K562 (cell line): ENCODE measurements at regions of chr3 and their contacts with region 1.

Region 1: GRCh38 chr3:99499235-99500158 is 138.9 kb upstream of the COL8A1 start:
- DNase-seq: peak; percentile 3 to 16 (median 6)
- ATAC-seq: peak; percentile 63; the same call in 2 of the 3 replicates
- H3K4me3 ChIP-seq: no peak overlapping the region
- H3K27ac ChIP-seq: no peak overlapping the region
- H3K4me1 ChIP-seq: no peaks in the 10 kb centered on the region
- H3K27me3 ChIP-seq: no peaks in the 10 kb centered on the region
- CTCF ChIP-seq: peak; percentile 22 to 45 (median 34); a peak in 3 of 6 replicates
- EP300 ChIP-seq: no peak
- POLR2A ChIP-seq: no peak
- RAD21 ChIP-seq: peak; percentile 24 to 32; a peak in 3 of 4 replicates

Region 2: DNA sequence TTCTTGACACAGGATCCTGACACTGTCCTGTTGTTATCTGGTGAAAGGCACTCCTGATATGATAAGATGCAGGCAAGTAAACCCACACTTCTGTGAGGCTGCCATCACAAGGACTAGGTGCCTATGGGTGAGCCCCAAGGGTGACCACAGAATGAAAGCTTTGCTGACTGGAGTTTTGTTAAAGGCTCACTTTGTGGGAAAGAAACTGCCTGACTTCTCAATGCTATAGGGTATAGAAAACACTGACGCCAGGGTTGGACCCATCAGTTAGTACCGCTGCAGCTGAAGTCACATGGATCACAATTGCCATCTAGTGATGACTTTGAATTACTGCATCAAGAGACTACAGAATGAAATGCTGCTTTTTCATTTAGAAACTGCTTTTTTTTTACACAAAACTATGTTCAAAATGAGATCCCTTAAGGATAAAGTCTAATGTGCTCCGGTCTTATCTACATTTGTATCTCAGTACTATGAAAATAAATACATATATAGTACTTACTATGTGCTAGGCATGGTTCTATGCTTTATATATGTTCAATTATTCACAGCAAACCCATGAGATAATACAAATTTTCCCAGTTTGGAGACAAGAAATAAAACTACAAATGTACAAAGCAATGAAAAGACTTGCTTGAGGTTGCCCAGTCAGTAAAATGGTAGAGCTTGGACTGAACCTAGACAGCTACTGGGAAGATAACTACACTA is 253.9 kb after region 1 on chr3:
- CTCF ChIA-PET with region 1: no interaction called
- POLR2A ChIA-PET with region 1: no interaction called
- in situ Hi-C with region 1: no loop called
- intact Hi-C with region 1: loop called (anchors 1 kb)
- DNase-seq: peak; percentile 5 to 44 (median 14)
- ATAC-seq: peak; percentile 80
- H3K4me3 ChIP-seq: no peak overlapping the region
- H3K27ac ChIP-seq: no peak overlapping the region
- H3K4me1 ChIP-seq: no peaks in the 10 kb centered on the region
- H3K27me3 ChIP-seq: no peaks in the 10 kb centered on the region
- CTCF ChIP-seq: peak; percentile 51 to 78 (median 63)
- EP300 ChIP-seq: no peak
- POLR2A ChIP-seq: no peak
- RAD21 ChIP-seq: peak; percentile 78 to 80

Region 3: GRCh38 chr3:99789011-99789721 is 289.7 kb after region 1 on chr3:
- CTCF ChIA-PET with region 1: no interaction called
- POLR2A ChIA-PET with region 1: no interaction called
- in situ Hi-C with region 1: no loop called
- intact Hi-C with region 1: loop called (anchors 10 kb)
- DNase-seq: peak in 3 of 4 experiments; percentile 8 to 36 (median 25)
- ATAC-seq: peak; percentile 96
- H3K4me3 ChIP-seq: no peak overlapping the region
- H3K27ac ChIP-seq: no peak overlapping the region
- H3K4me1 ChIP-seq: no peaks in the 10 kb centered on the region
- H3K27me3 ChIP-seq: peaks cover 0 to 4% of the 10 kb centered on the region in 2 experiments; a peak in 1 of 5 replicates
- CTCF ChIP-seq: peak; percentile 53 to 69 (median 62)
- EP300 ChIP-seq: no peak
- POLR2A ChIP-seq: no peak
- RAD21 ChIP-seq: peak; percentile 80 to 84